ENCODE measurements at regions of chr1 and their contacts with region 1.

Region 1: GRCh38 chr1:65059930-65060538 is 88.0 kb upstream of the AK4 start:
- DNase-seq: no peak
- ATAC-seq: peak in 2 of 4 donors; percentile 43 to 49
- H3K4me3 ChIP-seq: no peak overlapping the region
- H3K27ac ChIP-seq: no peak overlapping the region
- H3K4me1 ChIP-seq: peaks cover 0 to 90% (median 58%) of the 10 kb centered on the region in 12 donors
- H3K27me3 ChIP-seq: no peaks in the 10 kb centered on the region
- CTCF ChIP-seq: peak; percentile 49 to 78 (median 70)
- POLR2A ChIP-seq: no peak

Region 2: DNA sequence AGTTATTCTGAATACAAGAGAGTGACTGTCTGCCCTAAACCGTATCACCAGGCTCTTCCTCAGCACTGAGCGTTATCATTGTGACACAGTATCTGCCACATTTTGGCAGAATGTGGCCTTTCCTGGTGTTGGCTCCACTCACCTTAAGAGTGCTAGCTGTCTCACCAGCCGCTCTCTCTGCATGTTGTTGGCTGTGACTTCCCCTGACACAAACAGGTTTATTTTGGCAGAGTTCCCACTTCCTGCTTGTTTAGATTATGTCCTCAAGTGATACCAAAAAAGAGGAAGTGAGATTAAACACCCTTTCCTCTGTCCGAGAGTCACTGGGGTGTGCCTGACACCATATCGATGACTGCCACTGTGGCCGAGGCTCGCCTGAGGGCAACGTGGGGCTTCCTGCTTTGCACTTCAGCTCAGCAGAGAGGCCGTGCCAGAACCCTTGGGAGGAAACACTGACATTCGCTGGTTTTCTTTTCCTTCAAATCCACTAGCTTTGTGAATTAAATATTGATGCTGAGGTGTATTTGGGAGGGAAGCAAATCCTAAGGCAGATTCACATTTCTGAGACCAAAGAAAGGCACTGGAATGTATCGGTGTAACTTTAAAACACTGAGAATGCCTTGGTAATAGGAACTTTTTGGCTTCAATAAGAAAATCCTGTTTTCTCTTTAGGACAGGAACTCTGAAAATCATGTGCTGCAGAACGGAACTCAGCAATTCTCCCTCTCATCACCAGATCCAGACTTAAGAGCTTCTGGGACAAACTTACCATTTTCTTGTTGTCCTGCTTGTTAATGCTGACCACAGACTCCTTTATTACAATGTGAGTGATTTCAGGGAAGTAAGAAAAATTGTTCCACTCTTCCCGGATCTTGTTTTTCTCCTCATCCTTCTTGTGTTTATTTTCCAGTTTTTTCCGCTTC is 195.8 kb before region 1 on chr1:
- intact Hi-C with region 1: loop called in 4 of 10 experiments (anchors 5 to 10 kb)
- DNase-seq: peak; percentile 63 to 88 (median 77)
- ATAC-seq: peak; percentile 45 to 94 (median 85)
- H3K4me3 ChIP-seq: no peak overlapping the region
- H3K27ac ChIP-seq: peak overlapping the region in 9 of 12 donors; percentile 17 to 85 (median 39)
- H3K4me1 ChIP-seq: peaks cover 0 to 28% (median 5%) of the 10 kb centered on the region in 12 donors
- H3K27me3 ChIP-seq: no peaks in the 10 kb centered on the region
- CTCF ChIP-seq: no peak
- POLR2A ChIP-seq: no peak

Region 3: GRCh38 chr1:65002508-65003315 is 57.3 kb before region 1 on chr1:
- intact Hi-C with region 1: loop called in 3 of 10 experiments (anchors 5 kb)
- DNase-seq: peak; percentile 79 to 91 (median 88)
- ATAC-seq: peak; percentile 56 to 93 (median 86)
- H3K4me3 ChIP-seq: peak overlapping the region; percentile 27 to 82 (median 67)
- H3K27ac ChIP-seq: peak overlapping the region; percentile 78 to 98 (median 92)
- H3K4me1 ChIP-seq: peaks cover 4 to 31% (median 16%) of the 10 kb centered on the region in 12 donors
- H3K27me3 ChIP-seq: no peaks in the 10 kb centered on the region
- CTCF ChIP-seq: peak in 1 of 12 donors; percentile 5
- POLR2A ChIP-seq: peak in 1 of 2 donors; percentile 42

Region 4: GRCh38 chr1:65009724-65010420 is 50.2 kb before region 1 on chr1:
- intact Hi-C with region 1: loop called in 1 of 10 experiments (anchors 5 kb)
- DNase-seq: no peak
- ATAC-seq: no peak
- H3K4me3 ChIP-seq: no peak overlapping the region
- H3K27ac ChIP-seq: no peak overlapping the region
- H3K4me1 ChIP-seq: peaks cover 0 to 15% (median 0%) of the 10 kb centered on the region in 12 donors
- H3K27me3 ChIP-seq: no peaks in the 10 kb centered on the region
- CTCF ChIP-seq: no peak
- POLR2A ChIP-seq: no peak

Region 5: DNA sequence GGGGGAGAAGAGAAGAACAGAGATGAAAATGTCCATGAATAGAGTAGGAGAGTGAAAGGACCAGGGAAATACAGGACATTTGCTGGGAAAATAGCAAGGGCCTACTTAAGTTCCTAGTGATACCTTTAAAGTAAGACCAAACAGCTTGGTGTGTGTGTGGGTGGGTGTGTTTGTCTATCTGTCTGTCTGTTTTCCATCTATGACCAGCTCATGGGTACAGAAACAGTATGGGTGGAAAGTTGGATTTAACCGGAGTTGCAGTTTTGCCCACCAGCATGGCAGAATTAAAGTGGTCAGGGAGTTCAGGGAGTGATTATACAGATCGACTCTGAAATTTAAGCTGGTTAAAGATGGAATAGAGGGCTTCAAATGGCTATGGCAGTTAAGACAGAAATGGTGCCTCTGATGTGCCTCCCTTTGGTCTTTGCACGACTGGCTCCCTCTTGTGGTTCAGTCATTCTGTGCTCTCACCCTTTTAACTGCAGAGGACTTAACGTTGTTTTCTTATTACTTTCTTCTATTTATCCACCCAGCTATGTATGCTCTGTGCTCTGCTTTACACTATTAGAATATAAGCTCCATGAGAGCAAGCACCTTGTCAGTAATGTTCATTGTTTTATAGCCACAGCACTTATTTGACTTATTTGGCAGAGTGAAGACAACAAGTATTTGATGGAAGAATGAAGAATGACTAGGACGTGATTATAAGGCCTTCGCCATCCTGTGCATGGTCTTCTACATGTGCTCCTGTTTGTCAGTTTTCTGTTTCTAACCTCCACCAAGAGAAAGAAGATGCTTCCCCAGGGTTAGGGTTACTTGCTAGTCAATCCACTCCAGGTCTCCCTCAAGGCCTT is 15.3 kb after region 1 on chr1:
- intact Hi-C with region 1: loop called in 1 of 10 experiments (anchors 2 kb)
- DNase-seq: peak in 3 of 5 donors; percentile 37 to 59 (median 53)
- ATAC-seq: peak; percentile 65 to 89 (median 83)
- H3K4me3 ChIP-seq: no peak overlapping the region
- H3K27ac ChIP-seq: no peak overlapping the region
- H3K4me1 ChIP-seq: no peaks in the 10 kb centered on the region
- H3K27me3 ChIP-seq: no peaks in the 10 kb centered on the region
- CTCF ChIP-seq: peak; percentile 59 to 81 (median 73)
- POLR2A ChIP-seq: no peak

Region 6: DNA sequence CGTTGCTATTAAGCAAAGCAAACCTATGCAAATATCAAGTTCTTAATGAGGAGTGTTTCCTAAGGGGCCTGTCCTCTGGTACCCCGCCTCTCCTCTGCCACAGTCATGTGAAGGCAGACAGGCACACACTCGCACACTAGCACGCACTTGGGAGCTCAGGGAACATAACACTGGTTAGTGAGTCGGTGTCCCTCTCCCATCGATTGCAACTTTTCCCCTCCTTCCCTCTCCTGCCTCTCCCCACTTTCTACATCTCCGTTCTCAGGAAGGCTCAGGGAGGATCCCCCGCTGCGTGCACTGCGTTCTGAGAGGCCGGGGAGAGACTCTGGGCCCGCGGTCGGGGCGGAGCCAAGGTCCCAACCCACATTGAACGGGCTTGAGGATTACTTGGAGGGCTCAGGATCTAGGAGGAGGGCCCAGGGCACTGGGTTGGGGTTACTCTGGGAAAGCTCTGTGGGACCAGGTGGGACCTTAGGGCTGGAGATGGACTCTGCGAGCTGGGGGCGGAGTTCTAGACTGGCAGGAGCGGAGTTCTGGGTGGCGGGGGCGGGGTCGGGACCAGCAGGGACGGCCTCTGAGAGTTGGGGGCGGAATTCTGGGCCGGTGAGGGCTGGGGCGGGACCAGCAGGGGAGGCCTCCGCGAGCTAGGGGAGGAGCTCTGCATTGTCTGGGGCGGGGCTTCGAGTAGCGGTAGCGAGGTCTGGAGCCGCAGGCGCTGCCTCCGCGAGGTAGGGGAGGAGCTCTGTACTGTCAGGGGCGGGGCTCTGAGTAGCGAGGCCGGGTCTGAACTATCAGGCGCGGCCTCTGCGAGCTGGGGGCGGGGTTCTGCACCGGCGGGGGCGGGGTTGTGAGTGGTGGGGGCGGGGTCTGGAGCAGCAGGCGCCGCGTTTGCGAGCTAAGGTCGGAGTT is 359.9 kb after region 1 on chr1:
- intact Hi-C with region 1: loop called in 7 of 10 experiments (anchors 5 to 10 kb)
- DNase-seq: peak; percentile 98 to 99 (median 99)
- ATAC-seq: peak; percentile 97 to 99 (median 98)
- H3K4me3 ChIP-seq: peak overlapping the region; percentile 36 to 98 (median 80)
- H3K27ac ChIP-seq: peak overlapping the region; percentile 92 to 99 (median 97)
- H3K4me1 ChIP-seq: peaks cover 0 to 45% (median 27%) of the 10 kb centered on the region in 12 donors
- H3K27me3 ChIP-seq: no peaks in the 10 kb centered on the region
- CTCF ChIP-seq: no peak
- POLR2A ChIP-seq: peak in 1 of 2 donors; percentile 38

Measured in heart left ventricle (tissue), 16 donors.